SK-N-SH (cell line): ENCODE measurements at regions of chr12 and their contacts with region 1.

Region 1: GRCh38 chr12:121494093-121494787 is 86.6 kb downstream of the KDM2B start:
- DNase-seq: peak; percentile 73
- H3K4me3 ChIP-seq: no peak overlapping the region
- H3K27ac ChIP-seq: no peak overlapping the region
- H3K4me1 ChIP-seq: no peaks in the 10 kb centered on the region
- H3K27me3 ChIP-seq: no peaks in the 10 kb centered on the region
- CTCF ChIP-seq: peak; percentile 86
- EP300 ChIP-seq: no peak
- RAD21 ChIP-seq: peak; percentile 51

Region 2: GRCh38 chr12:121476477-121476876 is 17.8 kb before region 1 on chr12:
- CTCF ChIA-PET with region 1: interaction called, 26 read pairs
- POLR2A ChIA-PET with region 1: no interaction called
- DNase-seq: no peak
- H3K4me3 ChIP-seq: no peak overlapping the region
- H3K27ac ChIP-seq: no peak overlapping the region
- H3K4me1 ChIP-seq: peaks cover 0 to under 1% of the 10 kb centered on the region in 2 experiments; a peak in 1 of 4 replicates
- H3K27me3 ChIP-seq: no peaks in the 10 kb centered on the region
- CTCF ChIP-seq: no peak
- EP300 ChIP-seq: no peak
- RAD21 ChIP-seq: no peak

Region 3: DNA sequence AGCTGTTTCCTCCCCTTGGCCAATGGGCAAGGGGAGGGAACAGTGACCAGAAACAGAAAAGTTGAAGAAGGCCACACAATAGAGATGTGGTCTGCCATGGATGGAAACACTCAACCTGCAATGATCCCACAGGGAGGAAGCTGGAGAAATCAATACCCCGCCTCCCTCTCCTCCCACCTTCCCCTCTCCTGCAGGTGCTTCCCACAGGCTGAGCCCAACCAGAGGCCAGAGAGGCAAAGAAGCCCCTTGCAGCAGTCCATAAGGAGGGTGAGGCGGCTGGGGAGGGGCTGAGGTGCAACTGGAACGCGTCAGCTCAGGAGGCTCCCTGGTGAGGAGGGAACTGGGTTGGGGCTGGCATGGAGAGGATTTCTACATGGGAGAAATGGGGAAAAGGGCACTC is 10.3 kb before region 1 on chr12:
- CTCF ChIA-PET with region 1: interaction called, 26 read pairs
- POLR2A ChIA-PET with region 1: no interaction called
- DNase-seq: no peak
- H3K4me3 ChIP-seq: no peak overlapping the region
- H3K27ac ChIP-seq: no peak overlapping the region
- H3K4me1 ChIP-seq: no peaks in the 10 kb centered on the region
- H3K27me3 ChIP-seq: no peaks in the 10 kb centered on the region
- CTCF ChIP-seq: no peak
- EP300 ChIP-seq: no peak
- RAD21 ChIP-seq: no peak

Region 4: DNA sequence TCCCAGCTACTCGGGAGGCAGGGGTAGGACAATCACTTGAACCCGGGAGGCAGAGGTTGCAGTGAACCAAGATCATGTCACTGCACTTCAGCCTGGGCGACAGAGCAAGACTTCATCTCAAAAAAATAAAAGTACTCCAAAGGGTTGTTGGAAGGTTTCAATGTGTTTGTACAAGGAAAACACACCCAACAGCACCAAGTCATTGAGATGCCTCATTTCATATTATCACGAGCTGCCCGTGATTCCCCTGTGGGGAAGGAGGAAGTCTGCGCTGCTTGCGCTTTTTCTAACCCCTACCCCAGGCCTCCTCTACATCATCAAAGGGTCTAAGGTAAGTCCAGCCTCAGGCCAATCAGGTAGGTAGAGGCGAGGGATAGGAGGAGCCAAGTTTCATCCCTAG is 13.0 kb after region 1 on chr12:
- CTCF ChIA-PET with region 1: interaction called, 24 read pairs
- POLR2A ChIA-PET with region 1: no interaction called
- DNase-seq: no peak
- H3K4me3 ChIP-seq: no peak overlapping the region
- H3K27ac ChIP-seq: no peak overlapping the region
- H3K4me1 ChIP-seq: no peaks in the 10 kb centered on the region
- H3K27me3 ChIP-seq: no peaks in the 10 kb centered on the region
- CTCF ChIP-seq: no peak
- EP300 ChIP-seq: no peak
- RAD21 ChIP-seq: no peak

Region 5: GRCh38 chr12:121697098-121697698 is 203.0 kb after region 1 on chr12:
- CTCF ChIA-PET with region 1: no interaction called
- POLR2A ChIA-PET with region 1: no interaction called
- DNase-seq: peak; percentile 51
- H3K4me3 ChIP-seq: peak overlapping the region in 1 of 2 experiments; percentile 17; a peak in 1 of 4 replicates
- H3K27ac ChIP-seq: peak overlapping the region in 1 of 2 experiments; percentile 13; a peak in 1 of 4 replicates
- H3K4me1 ChIP-seq: no peaks in the 10 kb centered on the region
- H3K27me3 ChIP-seq: no peaks in the 10 kb centered on the region
- CTCF ChIP-seq: peak; percentile 70
- EP300 ChIP-seq: no peak
- RAD21 ChIP-seq: peak; percentile 80

Region 6: DNA sequence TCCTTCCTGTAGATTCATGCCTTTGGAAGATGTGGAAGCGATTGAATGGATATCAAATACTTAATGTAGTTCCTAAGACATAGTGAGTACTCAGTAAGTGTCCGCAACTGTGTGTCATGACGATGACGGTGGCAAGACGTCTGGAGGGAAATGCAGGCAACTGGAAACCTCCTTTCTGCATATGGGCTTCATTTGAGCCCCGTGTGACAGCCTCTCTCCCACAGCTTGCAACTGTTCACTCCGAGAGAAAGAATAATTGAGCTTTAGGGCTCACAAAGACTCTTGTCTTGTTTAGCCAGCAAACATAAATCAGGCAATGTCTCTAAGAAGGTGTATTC is 431.1 kb after region 1 on chr12:
- CTCF ChIA-PET with region 1: no interaction called
- POLR2A ChIA-PET with region 1: no interaction called
- DNase-seq: no peak
- H3K4me3 ChIP-seq: no peak overlapping the region
- H3K27ac ChIP-seq: peak overlapping the region in 1 of 2 experiments; percentile 88; a peak in 3 of 4 replicates
- H3K4me1 ChIP-seq: peaks cover 0 to 32% of the 10 kb centered on the region in 2 experiments; a peak in 2 of 4 replicates
- H3K27me3 ChIP-seq: no peaks in the 10 kb centered on the region
- CTCF ChIP-seq: no peak
- EP300 ChIP-seq: no peak
- RAD21 ChIP-seq: no peak

Region 7: DNA sequence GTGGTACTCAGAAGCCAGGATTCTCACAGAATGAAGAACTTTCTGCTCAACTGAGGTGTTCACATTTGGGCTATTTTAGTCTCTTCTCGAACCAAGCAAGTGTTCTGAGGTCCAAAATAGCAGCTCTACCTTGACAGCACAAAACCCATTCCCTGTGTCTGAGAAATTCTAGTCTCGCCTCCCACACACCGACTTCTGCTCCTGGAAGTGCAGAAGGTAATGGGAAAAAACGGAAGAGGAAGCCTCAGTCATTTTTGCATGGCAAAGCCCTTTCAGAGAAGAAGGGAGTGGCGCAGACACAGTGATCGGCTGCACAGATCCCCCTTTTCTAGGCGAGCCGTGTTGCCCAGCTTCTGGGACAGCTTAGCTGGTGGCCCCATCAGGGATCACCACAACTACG is 803.3 kb after region 1 on chr12:
- CTCF ChIA-PET with region 1: no interaction called
- POLR2A ChIA-PET with region 1: no interaction called
- DNase-seq: no peak
- H3K4me3 ChIP-seq: no peak overlapping the region
- H3K27ac ChIP-seq: no peak overlapping the region
- H3K4me1 ChIP-seq: no peaks in the 10 kb centered on the region
- H3K27me3 ChIP-seq: no peaks in the 10 kb centered on the region
- CTCF ChIP-seq: no peak
- EP300 ChIP-seq: no peak
- RAD21 ChIP-seq: no peak